HepG2 (cell line): ENCODE measurements at regions of chr11 and their contacts with region 1.

Region 1: DNA sequence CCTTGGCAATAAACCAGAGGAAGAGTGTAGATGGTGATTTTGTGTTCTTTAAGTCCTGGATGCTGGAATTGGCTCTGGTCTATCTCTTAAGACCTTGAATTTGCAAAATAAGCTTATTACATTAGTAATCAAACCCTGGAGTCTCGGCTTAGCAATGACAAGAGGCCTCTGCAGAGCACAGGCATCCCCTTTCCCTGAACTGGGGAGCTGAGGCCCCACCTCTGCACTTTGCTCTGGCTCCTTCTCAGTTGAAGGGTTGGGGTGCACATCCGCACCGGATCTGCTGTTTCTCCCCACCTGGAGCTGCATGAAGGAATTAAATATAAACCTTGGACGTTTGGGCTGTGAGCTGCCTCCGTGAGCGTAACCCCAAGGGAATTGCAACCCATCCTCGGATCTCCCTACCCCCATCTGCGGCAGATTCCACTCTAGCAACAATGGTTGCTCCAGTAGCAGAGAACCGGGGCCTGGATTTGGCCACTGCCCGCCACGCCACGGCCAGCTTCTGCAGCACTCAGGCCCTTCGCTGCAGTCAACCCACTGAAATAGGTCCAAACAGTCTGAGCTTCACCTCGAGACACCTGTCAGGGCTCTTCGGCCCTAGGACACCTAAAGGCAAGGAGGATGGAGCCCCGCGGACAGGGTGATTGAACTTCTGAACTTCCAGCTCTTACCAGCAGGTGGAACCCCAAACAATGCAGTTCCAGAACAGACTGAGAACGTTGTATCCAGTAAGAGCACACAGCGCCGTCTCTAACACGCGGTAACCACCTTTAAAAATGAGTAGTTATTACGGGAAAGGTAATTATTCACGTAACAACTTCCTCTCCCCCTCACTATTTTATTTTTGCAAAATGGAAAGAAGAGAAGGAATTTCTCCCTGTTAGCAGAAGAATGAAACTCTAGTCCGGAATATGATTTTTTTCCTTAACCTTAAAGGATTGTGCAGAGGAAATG is 54.8 kb upstream of the CAPRIN1 start:
- DNase-seq: peak; percentile 62
- ATAC-seq: peak; percentile 98
- H3K4me3 ChIP-seq: peak overlapping the region in 2 of 3 experiments; percentile 6 to 66; a peak in 4 of 6 replicates
- H3K27ac ChIP-seq: no peak overlapping the region
- H3K4me1 ChIP-seq: peaks cover 18% of the 10 kb centered on the region
- H3K27me3 ChIP-seq: peaks cover 0 to 12% of the 10 kb centered on the region in 2 experiments; a peak in 2 of 5 replicates
- CTCF ChIP-seq: peak; percentile 91
- EP300 ChIP-seq: no peak
- POLR2A ChIP-seq: no peak
- RAD21 ChIP-seq: peak; percentile 60; the same call in 1 of the 2 replicates

Region 2: GRCh38 chr11:33959855-33960400 is 36.8 kb before region 1 on chr11:
- CTCF ChIA-PET with region 1: no interaction called
- POLR2A ChIA-PET with region 1: no interaction called
- in situ Hi-C with region 1: no loop called
- intact Hi-C with region 1: no loop called
- DNase-seq: no peak
- ATAC-seq: no peak
- H3K4me3 ChIP-seq: no peak overlapping the region
- H3K27ac ChIP-seq: no peak overlapping the region
- H3K4me1 ChIP-seq: no peaks in the 10 kb centered on the region
- H3K27me3 ChIP-seq: peaks cover 1 to 7% of the 10 kb centered on the region in 2 experiments; a peak in 2 of 5 replicates
- CTCF ChIP-seq: no peak
- EP300 ChIP-seq: no peak
- POLR2A ChIP-seq: no peak
- RAD21 ChIP-seq: no peak

Region 3: GRCh38 chr11:34051349-34052035 is 54.7 kb after region 1 on chr11 and contains the start of gene CAPRIN1:
- CTCF ChIA-PET with region 1: no interaction called
- POLR2A ChIA-PET with region 1: interaction called, 3 read pairs
- in situ Hi-C with region 1: no loop called
- intact Hi-C with region 1: loop called (anchors 5 kb)
- DNase-seq: peak; percentile 89
- ATAC-seq: peak; percentile 88
- H3K4me3 ChIP-seq: peak within 1 kb of the TSS; percentile 95 to 100 (median 95)
- H3K27ac ChIP-seq: peak within 1 kb of the TSS; percentile 99
- H3K4me1 ChIP-seq: peaks cover 38% of the 10 kb centered on the region
- H3K27me3 ChIP-seq: no peaks in the 10 kb centered on the region
- CTCF ChIP-seq: peak; percentile 44
- EP300 ChIP-seq: no peak
- POLR2A ChIP-seq: peak; percentile 77 to 84
- RAD21 ChIP-seq: peak; percentile 74
- total RNA-seq, gene CAPRIN1: 162 and 284 TPM in 2 replicates

Region 4: GRCh38 chr11:34105079-34105956 is 108.5 kb after region 1 on chr11 and contains the start of gene NAT10:
- CTCF ChIA-PET with region 1: no interaction called
- POLR2A ChIA-PET with region 1: interaction called, 7 read pairs
- in situ Hi-C with region 1: no loop called
- intact Hi-C with region 1: loop called (anchors 1 kb)
- DNase-seq: peak; percentile 97
- ATAC-seq: peak; percentile 92
- H3K4me3 ChIP-seq: peak within 1 kb of the TSS; percentile 89 to 92 (median 91)
- H3K27ac ChIP-seq: peak within 1 kb of the TSS; percentile 88
- H3K4me1 ChIP-seq: peaks cover 27% of the 10 kb centered on the region
- H3K27me3 ChIP-seq: no peaks in the 10 kb centered on the region; a peak in 1 of 5 replicates
- CTCF ChIP-seq: peak; percentile 53
- EP300 ChIP-seq: peak in 1 of 2 experiments; percentile 16; a peak in 1 of 4 replicates
- POLR2A ChIP-seq: peak; percentile 94 to 98
- RAD21 ChIP-seq: no peak; the same call in none of the 2 replicates
- total RNA-seq, gene NAT10: 51.9 and 68.5 TPM in 2 replicates

Region 5: GRCh38 chr11:34468209-34468841 is 471.5 kb after region 1 on chr11:
- CTCF ChIA-PET with region 1: no interaction called
- POLR2A ChIA-PET with region 1: no interaction called
- in situ Hi-C with region 1: no loop called
- intact Hi-C with region 1: loop called (anchors 5 kb)
- DNase-seq: peak; percentile 30
- ATAC-seq: peak; percentile 54
- H3K4me3 ChIP-seq: no peak overlapping the region
- H3K27ac ChIP-seq: no peak overlapping the region
- H3K4me1 ChIP-seq: peaks cover 16% of the 10 kb centered on the region
- H3K27me3 ChIP-seq: no peaks in the 10 kb centered on the region
- CTCF ChIP-seq: peak; percentile 72
- EP300 ChIP-seq: no peak
- POLR2A ChIP-seq: no peak
- RAD21 ChIP-seq: peak; percentile 72

Region 6: DNA sequence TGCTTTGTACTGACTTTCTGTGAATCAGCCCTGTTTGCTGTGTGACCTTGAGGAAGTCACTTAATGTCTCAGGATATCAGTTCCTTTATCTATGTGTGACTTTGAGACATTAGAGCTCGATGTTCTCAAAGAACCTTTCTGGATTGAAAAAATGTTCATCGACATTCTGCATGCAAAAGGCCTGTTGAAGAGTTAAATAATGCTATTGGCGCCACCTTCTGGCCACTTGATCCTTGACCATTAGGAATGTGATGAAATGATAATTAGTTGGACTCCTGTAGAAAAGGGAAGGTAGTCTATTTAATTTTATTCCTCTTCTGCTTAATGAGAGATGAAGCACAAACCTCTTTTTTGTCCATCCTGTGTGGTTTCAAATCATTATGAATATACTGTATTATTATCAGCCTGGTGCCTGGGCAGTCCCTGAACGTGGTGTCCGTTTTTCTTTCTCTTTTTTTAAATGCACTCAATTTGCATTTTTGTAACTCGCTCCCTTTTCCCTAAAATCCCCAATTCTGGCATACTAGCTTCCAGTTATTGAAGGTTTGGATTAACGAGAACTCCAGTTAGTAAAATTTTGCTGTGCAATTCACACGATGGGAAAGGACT is 496.1 kb after region 1 on chr11:
- CTCF ChIA-PET with region 1: no interaction called
- POLR2A ChIA-PET with region 1: no interaction called
- in situ Hi-C with region 1: loop called (anchors 25 kb)
- intact Hi-C with region 1: no loop called
- DNase-seq: peak; percentile 68
- ATAC-seq: peak; percentile 49
- H3K4me3 ChIP-seq: no peak overlapping the region
- H3K27ac ChIP-seq: no peak overlapping the region
- H3K4me1 ChIP-seq: peaks cover 43% of the 10 kb centered on the region
- H3K27me3 ChIP-seq: no peaks in the 10 kb centered on the region
- CTCF ChIP-seq: peak; percentile 80
- EP300 ChIP-seq: no peak
- POLR2A ChIP-seq: no peak
- RAD21 ChIP-seq: peak; percentile 58; the same call in 1 of the 2 replicates